IMR-90 (cell line): ENCODE measurements at regions of chr4 and their contacts with region 1.

Region 1: GRCh38 chr4:123986268-123986798 is 589.7 kb downstream of the SPRY1 start:
- DNase-seq: peak; percentile 92
- ATAC-seq: peak; percentile 90
- H3K4me3 ChIP-seq: peak overlapping the region; percentile 8; the same call in 1 of the 2 replicates
- H3K27ac ChIP-seq: peak overlapping the region; percentile 92
- H3K4me1 ChIP-seq: peaks cover 3% of the 10 kb centered on the region
- H3K27me3 ChIP-seq: no peaks in the 10 kb centered on the region
- CTCF ChIP-seq: no peak
- POLR2A ChIP-seq: no peak
- RAD21 ChIP-seq: no peak

Region 2: GRCh38 chr4:123858465-123858864 is 127.9 kb before region 1 on chr4:
- CTCF ChIA-PET with region 1: no interaction called
- POLR2A ChIA-PET with region 1: interaction called, 10 read pairs
- dilution Hi-C with region 1: no loop called
- in situ Hi-C with region 1: no loop called
- intact Hi-C with region 1: no loop called
- DNase-seq: no peak
- ATAC-seq: peak; percentile 51
- H3K4me3 ChIP-seq: no peak overlapping the region
- H3K27ac ChIP-seq: no peak overlapping the region
- H3K4me1 ChIP-seq: peaks cover 7% of the 10 kb centered on the region
- H3K27me3 ChIP-seq: no peaks in the 10 kb centered on the region
- CTCF ChIP-seq: no peak
- POLR2A ChIP-seq: no peak
- RAD21 ChIP-seq: no peak